H1 (cell line): ENCODE measurements at regions of chr2 and their contacts with region 1.

Region 1: DNA sequence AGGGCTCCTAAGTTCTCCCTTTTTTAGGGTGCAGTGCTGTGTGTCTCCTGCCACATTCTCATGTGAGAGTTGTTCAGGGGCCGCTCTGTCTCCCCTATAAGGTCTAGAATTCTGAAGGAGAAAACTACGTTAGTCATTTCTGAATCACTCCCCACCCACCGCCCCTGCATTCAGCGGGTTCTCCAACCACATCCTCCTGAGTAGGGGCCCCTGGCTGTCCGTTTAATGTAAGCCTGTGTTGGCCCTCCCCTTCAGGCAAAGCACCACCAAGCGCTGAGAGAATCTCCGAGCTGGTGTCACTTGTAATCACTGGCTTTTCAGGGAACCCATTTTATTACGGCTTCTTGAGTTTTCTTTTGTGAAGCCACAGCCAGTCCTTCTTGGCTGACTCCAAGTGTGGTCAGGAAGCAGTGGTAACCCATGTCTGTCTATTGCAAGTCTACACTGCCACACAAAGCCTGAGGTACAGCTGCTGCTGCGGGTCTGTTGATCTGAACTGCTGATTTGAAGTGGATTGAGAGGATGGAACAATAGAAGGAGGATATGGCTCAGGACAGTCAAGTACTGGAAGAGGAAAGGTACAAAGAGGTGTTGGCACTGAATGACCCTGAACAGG is 16.9 kb downstream of the LCT start:
- DNase-seq: no peak
- H3K4me3 ChIP-seq: no peak overlapping the region
- H3K27ac ChIP-seq: no peak overlapping the region
- H3K4me1 ChIP-seq: no peaks in the 10 kb centered on the region; a peak in 1 of 7 replicates
- H3K27me3 ChIP-seq: no peaks in the 10 kb centered on the region
- CTCF ChIP-seq: no peak
- EP300 ChIP-seq: no peak
- POLR2A ChIP-seq: no peak
- RAD21 ChIP-seq: no peak

Region 2: DNA sequence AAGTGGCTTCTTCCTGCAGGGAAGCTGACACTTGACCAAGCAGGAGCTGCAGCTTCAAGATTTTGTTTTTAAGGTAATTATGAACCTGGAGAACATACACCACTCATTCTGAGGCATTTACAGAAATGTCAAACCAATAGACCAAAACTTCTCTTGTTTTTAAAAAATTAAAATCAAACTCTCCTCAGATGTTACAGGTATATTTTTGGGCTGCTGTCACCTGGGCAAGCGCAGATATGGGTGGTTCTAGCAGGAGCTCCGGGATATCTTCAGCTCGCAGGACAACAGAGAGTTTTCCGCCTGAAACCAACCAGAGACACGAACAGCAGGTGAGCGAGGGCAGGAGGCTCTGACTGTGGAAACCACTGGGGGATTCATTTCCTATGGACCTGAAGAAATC is 12.8 kb after region 1 on chr2:
- CTCF ChIA-PET with region 1: interaction called, 12 read pairs
- POLR2A ChIA-PET with region 1: interaction called, 3 read pairs
- DNase-seq: no peak
- H3K4me3 ChIP-seq: no peak overlapping the region
- H3K27ac ChIP-seq: no peak overlapping the region
- H3K4me1 ChIP-seq: no peaks in the 10 kb centered on the region
- H3K27me3 ChIP-seq: no peaks in the 10 kb centered on the region
- CTCF ChIP-seq: no peak
- EP300 ChIP-seq: no peak
- POLR2A ChIP-seq: no peak
- RAD21 ChIP-seq: no peak